B cell (primary cell): ENCODE measurements at regions of chr4 and their contacts with region 1.

Region 1: DNA sequence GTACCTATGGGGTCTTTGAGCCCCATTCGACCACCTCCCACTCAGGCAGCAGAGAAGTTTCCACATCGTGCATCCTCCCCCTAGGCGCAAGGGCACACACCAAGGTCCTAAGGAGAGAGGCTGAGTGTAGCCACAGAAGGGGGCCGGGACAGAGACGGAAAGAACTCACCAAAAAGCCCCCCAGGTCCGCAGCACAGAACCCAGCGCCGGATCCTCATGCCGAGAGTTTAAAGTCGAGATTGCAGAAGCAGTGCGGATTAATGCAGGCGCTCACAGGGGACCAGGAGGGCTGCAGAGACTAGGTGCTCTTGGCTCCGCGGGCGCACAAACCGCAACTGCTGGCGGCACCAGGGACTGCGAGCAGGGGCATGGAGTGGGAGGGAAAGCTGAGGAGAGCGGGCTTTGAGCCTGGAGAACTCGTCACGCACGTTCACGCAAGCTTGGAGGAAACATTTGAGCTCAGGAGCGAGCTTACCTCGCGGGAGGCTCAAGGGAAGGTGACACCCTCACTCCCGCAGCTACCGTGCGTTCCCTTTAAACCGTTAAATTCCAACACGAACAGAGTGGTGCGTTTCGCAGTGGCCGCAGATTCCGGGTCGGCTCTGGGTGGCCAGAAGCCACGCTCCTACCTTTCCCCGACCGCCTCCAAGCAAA is 8.5 kb downstream of the NKX3-2 start:
- DNase-seq: peak; percentile 43
- ATAC-seq: no peak
- H3K4me3 ChIP-seq: no peak overlapping the region
- H3K4me3 Mint-ChIP-seq: no peak overlapping the region
- H3K27ac ChIP-seq: no peak overlapping the region
- H3K27ac Mint-ChIP-seq: peak overlapping the region; percentile 26
- H3K4me1 ChIP-seq: peaks cover 24 to 48% of the 10 kb centered on the region in 2 donors
- H3K4me1 Mint-ChIP-seq: peaks cover 9% of the 10 kb centered on the region
- H3K27me3 ChIP-seq: peaks cover 0 to 98% (median 91%) of the 10 kb centered on the region in 4 experiments
- H3K27me3 Mint-ChIP-seq: peaks cover 72% of the 10 kb centered on the region
- CTCF ChIP-seq: no peak

Region 2: DNA sequence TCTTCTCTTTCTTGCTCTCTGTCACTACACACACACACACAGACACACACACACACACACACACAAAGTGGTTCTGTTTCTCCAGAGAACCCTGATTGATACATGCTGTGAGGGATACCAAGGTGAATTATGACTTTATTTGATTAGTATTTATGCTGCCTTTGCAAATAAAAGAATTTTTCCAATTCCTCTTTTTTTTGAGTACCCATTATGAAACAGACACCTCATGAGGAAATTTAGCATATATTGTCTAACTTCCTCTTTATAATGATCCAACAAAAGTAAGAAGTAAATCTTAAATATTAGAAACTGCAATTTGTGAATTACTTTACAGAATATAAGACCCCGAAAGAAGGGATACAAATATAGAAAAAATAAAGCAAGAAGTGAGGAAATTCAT is 37.4 kb before region 1 on chr4:
- CTCF ChIA-PET with region 1: no interaction called
- POLR2A ChIA-PET with region 1: no interaction called
- intact Hi-C with region 1: loop called (anchors 1 kb)
- DNase-seq: no peak
- ATAC-seq: no peak
- H3K4me3 ChIP-seq: no peak overlapping the region
- H3K4me3 Mint-ChIP-seq: no peak overlapping the region
- H3K27ac ChIP-seq: no peak overlapping the region
- H3K27ac Mint-ChIP-seq: no peak overlapping the region
- H3K4me1 ChIP-seq: no peaks in the 10 kb centered on the region
- H3K4me1 Mint-ChIP-seq: no peaks in the 10 kb centered on the region
- H3K27me3 ChIP-seq: peaks cover 0 to 28% (median 15%) of the 10 kb centered on the region in 4 experiments
- H3K27me3 Mint-ChIP-seq: peaks cover 53% of the 10 kb centered on the region
- CTCF ChIP-seq: no peak